HepG2 (cell line): ENCODE measurements at regions of chr9 and their contacts with region 1.

Region 1: DNA sequence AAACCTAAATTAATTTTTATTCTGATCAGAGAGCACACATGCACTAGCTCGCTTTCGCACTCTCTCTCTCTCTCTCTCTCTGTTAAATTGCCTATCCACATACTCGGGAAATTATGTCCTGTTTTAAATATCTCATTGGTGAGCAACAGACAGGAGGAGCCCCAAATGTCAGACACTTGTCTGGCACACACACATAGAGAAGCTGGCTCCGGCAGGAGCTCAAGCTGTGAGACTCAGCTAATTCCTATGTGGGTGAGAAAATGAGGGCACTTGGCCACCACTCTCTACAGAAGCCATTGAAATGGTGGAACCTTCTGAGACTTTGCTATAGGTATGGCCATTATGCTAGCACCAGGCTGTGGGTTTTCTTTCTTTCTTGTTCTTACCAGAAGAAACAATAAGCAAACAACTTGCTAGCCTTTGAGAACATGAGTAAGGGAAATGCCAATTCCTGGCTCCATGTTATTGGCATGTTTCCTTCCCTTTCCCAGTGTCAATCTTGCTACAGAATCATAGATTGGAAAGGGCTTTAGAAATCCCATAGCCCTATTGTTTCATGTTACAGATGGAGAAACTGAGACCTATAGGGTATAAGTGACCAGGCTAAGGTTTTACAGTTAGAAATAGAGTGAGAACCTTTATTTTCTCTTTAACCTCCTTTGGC is 9.0 kb downstream of the RFX3 start:
- DNase-seq: no peak
- ATAC-seq: no peak
- H3K4me3 ChIP-seq: no peak overlapping the region
- H3K27ac ChIP-seq: no peak overlapping the region
- H3K4me1 ChIP-seq: peaks cover 15% of the 10 kb centered on the region
- H3K27me3 ChIP-seq: no peaks in the 10 kb centered on the region
- CTCF ChIP-seq: no peak
- EP300 ChIP-seq: no peak
- POLR2A ChIP-seq: no peak
- RAD21 ChIP-seq: no peak

Region 2: GRCh38 chr9:3478549-3478953 is 38.2 kb before region 1 on chr9:
- CTCF ChIA-PET with region 1: no interaction called
- POLR2A ChIA-PET with region 1: no interaction called
- in situ Hi-C with region 1: loop called (anchors 5 kb)
- intact Hi-C with region 1: no loop called
- DNase-seq: peak; percentile 9
- ATAC-seq: no peak
- H3K4me3 ChIP-seq: no peak overlapping the region
- H3K27ac ChIP-seq: no peak overlapping the region
- H3K4me1 ChIP-seq: peaks cover 17% of the 10 kb centered on the region
- H3K27me3 ChIP-seq: no peaks in the 10 kb centered on the region
- CTCF ChIP-seq: no peak
- EP300 ChIP-seq: no peak
- POLR2A ChIP-seq: no peak
- RAD21 ChIP-seq: no peak

Region 3: DNA sequence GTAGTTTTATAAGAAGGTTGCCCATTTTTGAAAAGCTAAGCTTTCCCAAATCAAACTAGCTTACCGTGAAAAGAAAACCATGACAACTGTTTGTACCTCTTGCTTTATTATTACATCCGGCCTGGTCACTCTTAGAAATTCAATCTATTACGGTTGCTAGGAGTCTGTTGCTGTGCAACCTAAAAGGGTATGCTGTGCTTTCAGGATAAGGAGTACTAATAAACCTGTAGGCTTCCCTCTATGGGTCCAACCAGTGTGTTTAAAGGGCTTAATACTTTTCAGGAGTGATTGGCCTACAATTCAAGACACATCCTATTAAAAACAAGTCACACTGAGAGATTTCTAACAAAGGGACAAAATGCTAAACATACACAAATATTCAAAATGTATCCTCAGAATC is 18.1 kb before region 1 on chr9:
- CTCF ChIA-PET with region 1: no interaction called
- POLR2A ChIA-PET with region 1: no interaction called
- in situ Hi-C with region 1: no loop called
- intact Hi-C with region 1: no loop called
- DNase-seq: no peak
- ATAC-seq: no peak
- H3K4me3 ChIP-seq: no peak overlapping the region
- H3K27ac ChIP-seq: no peak overlapping the region
- H3K4me1 ChIP-seq: no peaks in the 10 kb centered on the region
- H3K27me3 ChIP-seq: no peaks in the 10 kb centered on the region
- CTCF ChIP-seq: no peak
- EP300 ChIP-seq: no peak
- POLR2A ChIP-seq: no peak
- RAD21 ChIP-seq: no peak

Region 4: DNA sequence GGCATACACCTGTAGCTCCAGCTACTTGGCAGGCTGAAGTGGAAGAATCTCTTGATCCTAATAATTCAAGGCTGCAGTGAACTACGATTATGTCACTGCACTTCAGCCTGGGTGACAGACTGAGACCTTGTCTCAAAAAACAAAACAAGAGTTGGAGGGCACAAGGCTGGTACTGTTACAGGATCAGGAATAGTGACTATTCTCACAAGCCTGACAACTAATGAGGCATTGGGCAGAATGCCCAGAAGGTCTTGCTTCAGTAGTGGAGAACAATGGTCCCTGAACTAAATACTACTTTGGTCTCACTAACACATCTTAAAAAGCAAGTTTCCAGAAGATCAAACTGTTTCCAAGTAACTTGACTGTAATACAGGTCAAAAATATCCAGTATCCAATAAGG is 192.0 kb after region 1 on chr9:
- CTCF ChIA-PET with region 1: no interaction called
- POLR2A ChIA-PET with region 1: no interaction called
- in situ Hi-C with region 1: no loop called
- intact Hi-C with region 1: no loop called
- DNase-seq: no peak
- ATAC-seq: no peak
- H3K4me3 ChIP-seq: no peak overlapping the region
- H3K27ac ChIP-seq: no peak overlapping the region
- H3K4me1 ChIP-seq: no peaks in the 10 kb centered on the region
- H3K27me3 ChIP-seq: no peaks in the 10 kb centered on the region
- CTCF ChIP-seq: no peak
- EP300 ChIP-seq: no peak
- POLR2A ChIP-seq: no peak
- RAD21 ChIP-seq: no peak